Activated CD8-positive, alpha-beta T cell treated with anti-CD3 and anti-CD28 coated beads for 36 hours (primary cell): ENCODE measurements at regions of chr6 and their contacts with region 1.

Region 1: GRCh38 chr6:3251462-3252314 is 7.1 kb upstream of the PSMG4 start:
- DNase-seq: peak; percentile 82
- ATAC-seq: peak; percentile 97
- H3K4me3 Mint-ChIP-seq: no peak overlapping the region
- H3K27ac Mint-ChIP-seq: no peak overlapping the region
- H3K4me1 Mint-ChIP-seq: peaks cover 2% of the 10 kb centered on the region
- H3K27me3 Mint-ChIP-seq: peaks cover 30% of the 10 kb centered on the region
- CTCF ChIP-seq: peak; percentile 99

Region 2: DNA sequence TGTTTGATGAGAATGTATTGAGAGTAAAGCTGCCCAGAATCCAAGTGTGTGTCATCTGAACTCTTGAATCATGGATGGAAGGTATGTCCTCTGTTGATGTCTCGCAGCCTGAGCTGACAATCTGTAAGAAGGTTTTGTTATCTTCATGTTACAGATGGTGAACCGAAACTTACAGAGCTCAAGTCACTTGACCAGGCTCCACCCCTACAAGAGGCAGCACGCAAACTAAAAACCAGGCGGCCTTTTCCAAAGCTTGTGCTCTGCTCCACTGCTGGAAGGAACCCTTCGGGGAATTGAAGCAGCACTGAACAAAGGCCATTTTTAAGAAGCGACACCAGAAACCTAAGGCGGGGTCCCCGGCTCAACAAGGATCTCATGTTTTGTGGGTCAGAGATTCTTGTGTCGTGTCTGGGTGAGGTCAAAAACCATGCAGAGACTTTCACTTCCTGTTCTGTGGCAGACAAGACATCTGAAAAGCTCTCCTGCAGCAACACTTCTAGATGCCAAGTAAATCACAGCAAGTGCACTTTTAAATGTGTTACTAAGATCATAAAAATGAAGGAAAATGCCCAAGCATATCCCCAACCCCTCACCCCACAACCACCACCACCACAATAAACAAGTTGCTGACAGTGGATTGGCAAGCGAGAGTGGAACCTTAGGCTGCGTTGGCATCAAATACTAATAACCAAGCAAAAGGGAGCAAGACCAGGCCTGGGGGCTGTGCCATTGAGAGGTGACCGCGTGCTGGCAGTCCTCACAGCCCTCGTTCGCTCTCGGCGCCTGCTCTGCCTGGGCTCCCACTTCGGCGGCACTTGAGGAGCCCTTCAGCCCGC is 224.7 kb before region 1 on chr6:
- CTCF ChIA-PET with region 1: no interaction called
- POLR2A ChIA-PET with region 1: no interaction called
- intact Hi-C with region 1: no loop called
- DNase-seq: peak; percentile 51
- ATAC-seq: peak; percentile 11
- H3K4me3 Mint-ChIP-seq: peak overlapping the region; percentile 47
- H3K27ac Mint-ChIP-seq: peak overlapping the region; percentile 80
- H3K4me1 Mint-ChIP-seq: peaks cover 44% of the 10 kb centered on the region
- H3K27me3 Mint-ChIP-seq: peaks cover 3% of the 10 kb centered on the region
- CTCF ChIP-seq: no peak

Region 3: DNA sequence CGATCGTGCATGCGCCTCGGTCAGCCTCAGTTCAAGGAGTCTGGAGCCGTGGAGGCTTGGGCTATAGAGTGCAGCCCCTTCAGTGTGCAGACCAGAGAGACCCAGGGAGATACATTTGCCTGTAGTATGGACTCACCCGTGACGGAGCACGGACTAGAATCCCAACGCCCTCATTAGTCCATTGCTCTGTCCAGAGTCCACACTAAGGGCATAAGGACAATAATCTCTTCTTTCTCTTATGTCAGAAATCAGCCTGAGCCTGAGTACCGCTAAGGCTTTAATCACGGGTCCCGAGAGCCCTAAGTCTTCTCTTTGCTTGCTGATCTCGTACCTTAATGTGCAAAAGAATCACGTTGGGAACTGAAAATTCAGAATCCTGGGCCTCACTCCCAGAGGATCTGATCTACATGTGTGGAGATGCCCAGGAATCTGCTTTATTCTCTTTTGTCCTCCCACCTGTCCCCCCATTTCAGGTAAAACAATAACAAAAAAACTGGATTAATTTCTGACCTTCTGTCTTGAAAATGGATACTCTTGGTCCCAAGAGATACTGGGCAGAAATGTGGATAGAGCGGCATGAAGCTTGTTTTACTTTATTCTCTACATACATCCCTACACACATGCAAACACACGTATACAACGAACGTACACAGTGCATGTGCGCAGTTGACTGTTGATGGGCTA is 132.5 kb before region 1 on chr6:
- CTCF ChIA-PET with region 1: interaction called, 92 read pairs
- POLR2A ChIA-PET with region 1: interaction called, 3 read pairs
- intact Hi-C with region 1: no loop called
- DNase-seq: no peak
- ATAC-seq: peak; percentile 14
- H3K4me3 Mint-ChIP-seq: peak overlapping the region; percentile 74
- H3K27ac Mint-ChIP-seq: peak overlapping the region; percentile 52
- H3K4me1 Mint-ChIP-seq: peaks cover 21% of the 10 kb centered on the region
- H3K27me3 Mint-ChIP-seq: no peaks in the 10 kb centered on the region
- CTCF ChIP-seq: no peak

Region 4: GRCh38 chr6:3147914-3148757 is 103.6 kb before region 1 on chr6:
- CTCF ChIA-PET with region 1: interaction called, 16 read pairs
- POLR2A ChIA-PET with region 1: no interaction called
- intact Hi-C with region 1: no loop called
- DNase-seq: no peak
- ATAC-seq: no peak
- H3K4me3 Mint-ChIP-seq: no peak overlapping the region
- H3K27ac Mint-ChIP-seq: no peak overlapping the region
- H3K4me1 Mint-ChIP-seq: peaks cover 4% of the 10 kb centered on the region
- H3K27me3 Mint-ChIP-seq: no peaks in the 10 kb centered on the region
- CTCF ChIP-seq: no peak

Region 5: GRCh38 chr6:3165631-3166534 is 85.8 kb before region 1 on chr6:
- CTCF ChIA-PET with region 1: interaction called, 11 read pairs
- POLR2A ChIA-PET with region 1: no interaction called
- intact Hi-C with region 1: no loop called
- DNase-seq: no peak
- ATAC-seq: no peak
- H3K4me3 Mint-ChIP-seq: no peak overlapping the region
- H3K27ac Mint-ChIP-seq: no peak overlapping the region
- H3K4me1 Mint-ChIP-seq: peaks cover 11% of the 10 kb centered on the region
- H3K27me3 Mint-ChIP-seq: peaks cover 6% of the 10 kb centered on the region
- CTCF ChIP-seq: no peak

Region 6: DNA sequence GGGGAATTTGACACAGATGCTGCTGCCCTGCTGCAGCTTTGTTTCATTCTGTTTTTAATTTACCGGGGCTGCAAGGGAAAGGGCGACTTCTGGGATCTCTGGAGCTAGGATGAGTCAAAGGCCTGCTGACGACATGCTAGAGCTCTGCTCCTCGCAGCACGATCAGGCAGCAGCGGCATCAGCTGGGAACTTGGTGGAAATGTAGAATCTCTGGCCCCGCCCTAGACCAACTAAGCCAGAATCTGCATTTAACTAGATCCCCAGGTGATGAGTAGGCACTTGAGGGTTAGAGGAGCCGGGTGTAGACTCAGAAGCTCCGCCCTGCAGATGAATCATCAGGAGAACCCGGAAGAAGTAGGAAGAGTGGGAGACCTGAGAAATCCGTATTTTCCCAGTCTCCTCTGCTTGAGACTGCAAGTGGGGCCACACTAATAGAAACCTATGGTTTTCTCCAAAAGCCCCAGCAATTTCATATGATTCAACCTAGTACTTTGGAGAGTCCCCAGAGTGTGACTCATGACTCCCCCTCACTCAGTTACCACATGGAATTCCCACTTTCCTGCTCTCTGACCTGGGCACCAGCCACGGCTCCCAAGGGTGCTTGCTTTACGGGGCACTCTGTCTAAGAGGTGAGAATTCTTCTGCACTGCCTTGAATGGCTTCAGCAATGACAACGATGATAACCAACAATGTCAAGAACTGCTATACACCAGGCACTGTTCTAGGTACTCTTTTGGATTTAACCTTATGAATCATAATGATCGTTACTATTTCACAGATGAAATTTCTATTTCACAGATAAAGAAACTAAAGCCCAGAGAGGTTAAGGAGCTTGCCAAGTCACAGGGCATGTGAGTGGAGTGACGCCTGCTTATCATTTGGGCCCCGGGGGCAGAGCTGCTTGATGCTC is 42.3 kb before region 1 on chr6:
- CTCF ChIA-PET with region 1: interaction called, 16 read pairs
- POLR2A ChIA-PET with region 1: no interaction called
- intact Hi-C with region 1: no loop called
- DNase-seq: peak; percentile 73
- ATAC-seq: peak; percentile 83
- H3K4me3 Mint-ChIP-seq: no peak overlapping the region
- H3K27ac Mint-ChIP-seq: peak overlapping the region; percentile 87
- H3K4me1 Mint-ChIP-seq: peaks cover 27% of the 10 kb centered on the region
- H3K27me3 Mint-ChIP-seq: peaks cover 18% of the 10 kb centered on the region
- CTCF ChIP-seq: no peak

Region 7: GRCh38 chr6:3239110-3239830 is 12.4 kb before region 1 on chr6:
- CTCF ChIA-PET with region 1: interaction called, 15 read pairs
- POLR2A ChIA-PET with region 1: interaction called, 3 read pairs
- intact Hi-C with region 1: no loop called
- DNase-seq: no peak
- ATAC-seq: no peak
- H3K4me3 Mint-ChIP-seq: no peak overlapping the region
- H3K27ac Mint-ChIP-seq: no peak overlapping the region
- H3K4me1 Mint-ChIP-seq: no peaks in the 10 kb centered on the region
- H3K27me3 Mint-ChIP-seq: peaks cover 32% of the 10 kb centered on the region
- CTCF ChIP-seq: no peak

Region 8: DNA sequence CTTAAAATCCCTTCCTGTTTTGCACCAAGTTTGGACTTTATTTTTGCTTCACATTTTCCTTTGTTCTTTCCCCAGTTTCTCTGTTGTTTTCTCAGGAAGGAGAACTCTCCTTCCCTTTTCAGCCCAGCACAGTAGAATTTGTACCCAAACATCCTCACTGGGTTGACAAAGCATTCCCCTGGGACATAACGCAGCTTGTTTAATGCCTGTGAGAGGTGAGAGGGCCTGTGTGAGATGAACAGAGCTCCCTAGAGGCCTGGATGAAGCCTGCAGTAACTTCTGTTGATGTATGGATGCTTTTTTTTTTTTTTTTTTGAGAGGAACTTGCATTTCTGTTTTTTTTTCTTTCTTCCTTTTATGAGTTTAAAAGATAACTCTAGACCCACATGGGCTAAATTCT is 310.0 kb after region 1 on chr6:
- CTCF ChIA-PET with region 1: no interaction called
- POLR2A ChIA-PET with region 1: no interaction called
- intact Hi-C with region 1: no loop called
- DNase-seq: no peak
- ATAC-seq: no peak
- H3K4me3 Mint-ChIP-seq: no peak overlapping the region
- H3K27ac Mint-ChIP-seq: no peak overlapping the region
- H3K4me1 Mint-ChIP-seq: no peaks in the 10 kb centered on the region
- H3K27me3 Mint-ChIP-seq: peaks cover 4% of the 10 kb centered on the region
- CTCF ChIP-seq: no peak